ENCODE measurements at regions of chr19 and their contacts with region 1.

Region 1: GRCh38 chr19:54463531-54464043 is at the start of gene LENG9:
- DNase-seq: peak; percentile 100
- H3K4me3 Mint-ChIP-seq: peak within 1 kb of the TSS; percentile 84
- H3K27ac Mint-ChIP-seq: peak within 1 kb of the TSS; percentile 92
- H3K4me1 Mint-ChIP-seq: peaks cover 21% of the 10 kb centered on the region
- H3K27me3 Mint-ChIP-seq: peaks cover 13% of the 10 kb centered on the region
- total RNA-seq, gene LENG9: 5.7 to 7.1 TPM

Region 2: DNA sequence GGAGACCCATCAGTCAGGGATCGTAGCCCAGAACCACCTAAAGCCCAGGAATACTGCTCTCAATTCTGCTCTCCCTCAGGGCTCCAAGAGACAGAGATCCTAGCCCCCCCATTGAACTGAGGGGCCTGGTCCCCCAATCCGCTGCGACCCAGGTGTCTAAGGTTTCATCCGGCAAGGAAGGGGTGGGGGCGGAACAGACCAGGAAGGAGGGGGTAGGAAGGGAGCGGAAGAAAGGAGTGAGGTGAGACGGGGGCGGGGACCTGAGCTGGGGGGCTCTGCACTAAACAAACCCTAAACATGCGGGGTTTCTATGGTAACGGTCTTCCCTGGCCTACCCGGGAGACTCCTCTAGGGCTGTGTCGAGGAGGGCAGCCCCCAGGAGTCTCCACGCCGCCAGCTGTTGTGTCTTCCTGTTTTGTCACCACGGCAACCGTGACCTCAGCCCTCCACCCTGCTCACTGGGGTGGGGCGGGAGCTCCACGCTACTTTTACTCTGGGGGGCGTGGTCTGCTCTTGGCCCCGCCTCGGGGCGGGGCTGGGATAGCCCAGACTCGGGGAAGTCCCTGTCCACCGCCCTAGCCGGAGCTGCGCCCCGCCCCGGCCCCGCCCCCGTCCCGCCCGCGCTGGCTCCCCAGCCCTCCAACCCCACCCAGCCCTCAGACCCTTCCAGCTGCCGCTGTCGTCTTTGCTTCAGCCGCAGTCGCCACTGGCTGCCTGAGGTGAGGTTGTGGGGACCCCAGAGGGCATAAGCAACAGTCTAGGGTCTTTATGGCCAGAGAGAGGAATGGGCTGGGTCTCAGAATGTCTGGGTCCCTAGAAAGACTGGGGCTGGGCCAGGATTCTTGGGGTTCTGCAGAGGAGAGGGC is 596.1 kb before region 1 on chr19 and contains the start of gene MYADM:
- CTCF ChIA-PET with region 1: no interaction called
- intact Hi-C with region 1: loop called (anchors 1 kb)
- DNase-seq: peak; percentile 99
- H3K4me3 Mint-ChIP-seq: peak within 1 kb of the TSS; percentile 88
- H3K27ac Mint-ChIP-seq: peak within 1 kb of the TSS; percentile 82
- H3K4me1 Mint-ChIP-seq: peaks cover 36% of the 10 kb centered on the region
- H3K27me3 Mint-ChIP-seq: no peaks in the 10 kb centered on the region
- total RNA-seq, gene MYADM: 13.6 to 13.9 TPM

Region 3: DNA sequence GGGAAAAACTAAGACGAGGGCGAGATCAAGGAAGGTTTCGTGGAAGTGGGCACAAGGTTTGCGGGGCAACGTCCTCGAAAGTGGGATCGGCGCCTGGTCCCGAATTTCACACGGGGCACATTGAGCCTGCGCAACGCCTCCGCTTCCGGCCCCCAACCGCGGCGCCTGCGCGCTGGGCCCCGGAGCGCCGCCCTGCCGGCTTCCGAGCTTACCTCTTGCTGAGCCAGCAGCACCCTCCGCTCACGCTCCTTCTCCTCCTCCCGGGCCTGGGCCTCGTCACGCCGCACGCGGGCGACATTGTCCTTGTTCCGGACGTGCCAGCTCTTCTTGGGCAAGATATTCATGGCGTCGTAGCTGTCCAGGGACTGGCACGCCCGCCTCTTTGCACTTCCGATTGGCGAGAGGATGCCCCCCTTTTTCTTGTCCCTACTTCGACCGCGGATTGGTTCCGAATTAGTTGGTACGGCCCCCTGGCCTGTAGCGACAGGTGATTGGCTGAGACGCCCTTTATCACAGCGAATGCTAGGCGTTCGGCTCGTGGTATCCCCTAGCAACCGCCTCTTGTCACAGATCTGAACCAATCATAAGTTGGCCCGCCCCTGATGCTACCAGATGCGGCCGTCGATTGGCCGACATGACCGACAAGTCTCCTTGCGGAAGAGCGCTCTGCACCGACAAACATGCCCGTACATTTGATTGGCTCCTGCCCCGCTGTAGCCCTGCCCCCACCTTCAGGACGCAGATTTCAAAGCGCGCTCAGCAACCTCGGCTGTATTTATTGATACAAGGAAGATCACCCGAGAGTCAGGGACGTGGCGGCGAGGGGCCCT is 304.0 kb before region 1 on chr19 and contains the start of gene LENG1:
- CTCF ChIA-PET with region 1: no interaction called
- intact Hi-C with region 1: loop called (anchors 1 kb)
- DNase-seq: peak; percentile 100
- H3K4me3 Mint-ChIP-seq: peak within 1 kb of the TSS; percentile 100
- H3K27ac Mint-ChIP-seq: peak within 1 kb of the TSS; percentile 99
- H3K4me1 Mint-ChIP-seq: peaks cover 58% of the 10 kb centered on the region
- H3K27me3 Mint-ChIP-seq: peaks cover 7% of the 10 kb centered on the region
- total RNA-seq, gene LENG1: 4.7 to 5.6 TPM

Region 4: DNA sequence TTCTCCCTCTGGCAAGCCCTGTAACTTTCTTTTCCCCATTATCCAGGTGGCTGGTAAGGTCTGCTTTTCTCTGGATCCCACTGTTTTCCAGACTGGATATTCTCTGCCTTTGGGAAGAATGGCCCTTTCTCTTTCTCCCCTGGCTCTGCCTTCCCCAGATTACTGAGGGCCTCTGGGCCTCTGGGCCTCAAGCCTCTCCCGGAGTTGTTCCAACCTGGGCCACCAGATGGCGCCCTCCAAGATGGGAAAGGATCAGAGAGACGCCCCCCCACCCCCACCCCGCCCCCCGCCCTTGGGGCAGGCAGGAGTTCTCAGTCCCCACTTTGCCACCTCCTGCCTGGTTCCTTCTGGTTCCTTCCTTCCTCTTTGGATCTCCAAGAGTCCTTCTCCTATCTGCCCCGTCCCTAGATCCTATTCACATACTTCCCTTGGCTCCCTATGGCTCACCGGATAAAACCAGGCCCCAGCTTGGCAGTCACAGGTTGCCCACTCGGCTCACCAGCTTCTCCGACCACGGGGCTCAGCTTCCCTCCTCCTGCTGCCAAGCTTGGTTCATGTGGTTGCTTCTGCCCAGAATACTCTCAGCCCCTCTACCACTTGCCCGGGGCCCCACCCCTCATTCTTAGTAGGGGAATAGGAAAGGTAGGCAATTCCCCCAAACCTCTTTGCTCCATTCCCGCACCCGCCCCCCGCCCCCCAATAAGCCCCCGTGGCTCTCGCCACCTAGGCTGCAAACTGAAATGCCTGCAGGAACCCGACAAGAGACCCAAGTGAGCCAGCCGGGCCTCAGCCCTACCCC is 625.2 kb after region 1 on chr19:
- CTCF ChIA-PET with region 1: no interaction called
- intact Hi-C with region 1: loop called (anchors 10 kb)
- DNase-seq: peak; percentile 86
- H3K4me3 Mint-ChIP-seq: no peak overlapping the region
- H3K27ac Mint-ChIP-seq: no peak overlapping the region
- H3K4me1 Mint-ChIP-seq: peaks cover 17% of the 10 kb centered on the region
- H3K27me3 Mint-ChIP-seq: peaks cover 43% of the 10 kb centered on the region

Region 5: GRCh38 chr19:55279770-55280643 is 816.4 kb after region 1 on chr19 and contains the start of gene HSPBP1:
- CTCF ChIA-PET with region 1: no interaction called
- intact Hi-C with region 1: loop called (anchors 5 kb)
- DNase-seq: peak; percentile 97
- H3K4me3 Mint-ChIP-seq: peak within 1 kb of the TSS; percentile 100
- H3K27ac Mint-ChIP-seq: peak within 1 kb of the TSS; percentile 93
- H3K4me1 Mint-ChIP-seq: peaks cover 28% of the 10 kb centered on the region
- H3K27me3 Mint-ChIP-seq: no peaks in the 10 kb centered on the region
- total RNA-seq, gene HSPBP1: 44.3 to 45.0 TPM

Region 6: DNA sequence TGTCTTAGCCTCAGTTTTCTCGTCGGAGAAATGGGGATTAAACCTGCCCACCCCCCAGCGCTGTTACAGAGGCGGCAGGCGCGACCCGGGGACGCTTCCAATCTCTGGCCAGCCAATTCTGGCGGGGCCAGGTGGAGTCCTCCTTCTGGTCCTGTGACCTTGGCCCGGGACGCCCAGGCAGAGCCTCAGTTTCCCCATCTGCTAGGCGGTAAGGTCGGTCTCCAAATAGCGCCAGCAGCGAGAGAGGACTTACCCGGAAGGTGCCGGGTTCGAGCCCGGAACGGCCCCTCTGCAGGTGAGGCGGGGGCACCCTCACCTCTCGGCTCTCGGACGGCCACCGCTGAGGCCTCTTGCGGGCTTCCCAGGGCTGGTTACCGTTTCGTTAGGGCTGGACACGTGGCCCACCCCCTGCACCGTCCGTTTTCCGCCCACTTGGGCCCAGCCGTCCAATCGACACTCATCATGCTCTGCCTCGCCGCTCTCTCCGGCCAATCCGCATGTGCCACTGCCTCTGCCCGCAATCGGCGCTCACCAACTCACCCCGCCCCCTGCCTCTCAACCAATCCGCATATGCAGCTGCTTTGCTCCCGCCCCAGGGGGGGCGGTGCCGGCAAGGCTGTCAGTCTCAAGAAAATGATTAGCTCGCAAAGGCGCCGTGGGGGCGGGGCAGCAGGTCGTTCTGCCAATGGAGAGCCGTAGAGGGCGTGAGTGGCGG is 997.8 kb after region 1 on chr19 and contains the start of gene ISOC2:
- CTCF ChIA-PET with region 1: no interaction called
- intact Hi-C with region 1: loop called (anchors 1 kb)
- DNase-seq: peak; percentile 100
- H3K4me3 Mint-ChIP-seq: peak within 1 kb of the TSS; percentile 93
- H3K27ac Mint-ChIP-seq: peak within 1 kb of the TSS; percentile 77
- H3K4me1 Mint-ChIP-seq: peaks cover 20% of the 10 kb centered on the region
- H3K27me3 Mint-ChIP-seq: no peaks in the 10 kb centered on the region
- total RNA-seq, gene ISOC2: 18.6 to 20.5 TPM

Region 7: GRCh38 chr19:56121180-56122167 is 1657.9 kb after region 1 on chr19 and contains the start of gene ZNF787:
- CTCF ChIA-PET with region 1: no interaction called
- intact Hi-C with region 1: loop called (anchors 5 kb)
- DNase-seq: peak; percentile 95
- H3K4me3 Mint-ChIP-seq: peak within 1 kb of the TSS; percentile 86
- H3K27ac Mint-ChIP-seq: peak within 1 kb of the TSS; percentile 94
- H3K4me1 Mint-ChIP-seq: peaks cover 52% of the 10 kb centered on the region
- H3K27me3 Mint-ChIP-seq: no peaks in the 10 kb centered on the region
- total RNA-seq, gene ZNF787: 24.2 to 26.1 TPM